ENCODE measurements at regions of chr18 and their contacts with region 1.

Region 1: GRCh38 chr18:73933685-73934084 is 213.9 kb downstream of the FBXO15 start:
- DNase-seq: no peak
- H3K4me3 ChIP-seq: no peak overlapping the region
- CTCF ChIP-seq: no peak
- POLR2A ChIP-seq: no peak

Region 2: DNA sequence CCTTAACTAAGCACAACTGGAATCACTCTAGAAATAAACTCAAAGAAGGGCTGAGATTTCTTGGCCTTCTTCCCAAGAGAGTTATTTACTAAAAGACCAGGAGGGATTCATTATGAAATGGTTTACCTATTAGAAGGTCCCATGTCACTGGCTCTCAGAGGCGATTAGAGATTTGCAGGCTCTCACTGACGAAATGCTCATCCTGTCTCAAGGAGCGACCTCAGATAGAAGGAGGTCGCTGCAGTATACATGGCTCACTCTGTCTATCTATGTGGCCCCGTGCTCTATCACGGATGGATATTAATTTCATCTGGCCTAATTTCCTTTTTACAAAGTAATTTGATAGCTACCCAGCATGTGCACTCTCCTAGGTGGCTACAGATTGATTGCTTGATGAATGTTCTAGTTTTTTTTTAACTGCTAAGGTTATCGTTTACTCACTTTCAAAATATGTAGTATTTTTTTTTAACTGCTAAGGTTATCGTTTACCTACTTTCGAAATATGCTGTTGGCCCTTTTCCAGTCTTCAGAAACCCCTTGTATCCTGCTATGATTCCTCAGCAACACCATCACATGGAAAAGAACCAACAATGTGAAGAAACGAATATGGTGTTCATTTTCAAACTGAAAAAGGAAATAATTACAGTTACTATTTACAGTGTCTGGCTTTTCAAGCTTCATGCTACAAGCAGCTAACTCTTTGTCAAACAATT is 1484.8 kb after region 1 on chr18:
- intact Hi-C with region 1: loop called (anchors 5 kb)
- DNase-seq: no peak
- H3K4me3 ChIP-seq: no peak overlapping the region
- CTCF ChIP-seq: no peak
- POLR2A ChIP-seq: no peak